ENCODE measurements at regions of chr6 and their contacts with region 1.

Region 1: DNA sequence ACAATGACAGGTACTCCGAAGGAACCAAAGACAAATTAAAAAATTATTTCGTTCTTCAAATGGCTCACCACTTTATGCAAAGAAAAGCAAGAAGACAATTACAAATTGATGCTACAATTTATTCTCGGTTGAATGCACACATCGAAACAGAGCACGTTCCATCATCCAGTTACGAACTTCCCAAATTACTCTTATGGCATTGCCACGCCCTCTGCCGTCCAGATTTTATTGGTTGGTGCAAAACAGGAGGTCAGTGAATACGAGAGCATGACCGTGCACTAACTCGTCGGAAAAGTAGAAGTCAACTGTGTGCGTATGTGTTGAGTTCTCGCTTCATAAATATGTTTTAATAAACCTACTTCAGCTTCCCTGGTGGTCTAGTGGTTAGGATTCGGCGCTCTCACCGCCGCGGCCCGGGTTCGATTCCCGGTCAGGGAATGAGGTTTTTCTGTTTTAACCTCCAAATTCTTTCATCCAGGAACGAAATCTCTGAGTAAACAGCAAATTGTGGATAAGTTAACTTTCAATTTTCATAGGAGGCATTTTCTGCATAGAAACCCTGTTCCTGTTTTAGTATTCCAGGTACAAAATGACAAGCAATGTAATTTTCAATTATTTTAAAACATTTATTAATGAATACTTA is 23.2 kb downstream of the ZNF311 start:
- DNase-seq: peak; percentile 81 to 82
- H3K4me3 ChIP-seq: peak overlapping the region; percentile 74
- H3K4me3 Mint-ChIP-seq: peak overlapping the region; percentile 94
- H3K27ac Mint-ChIP-seq: peak overlapping the region; percentile 91
- H3K4me1 ChIP-seq: 0 out of 2 replicates have a peak, but pooled peaks cover 4% of the 10 kb centered on the region
- H3K4me1 Mint-ChIP-seq: peaks cover 29% of the 10 kb centered on the region
- H3K27me3 ChIP-seq: no peaks in the 10 kb centered on the region
- H3K27me3 Mint-ChIP-seq: peaks cover 4% of the 10 kb centered on the region
- CTCF ChIP-seq: no peak

Region 2: DNA sequence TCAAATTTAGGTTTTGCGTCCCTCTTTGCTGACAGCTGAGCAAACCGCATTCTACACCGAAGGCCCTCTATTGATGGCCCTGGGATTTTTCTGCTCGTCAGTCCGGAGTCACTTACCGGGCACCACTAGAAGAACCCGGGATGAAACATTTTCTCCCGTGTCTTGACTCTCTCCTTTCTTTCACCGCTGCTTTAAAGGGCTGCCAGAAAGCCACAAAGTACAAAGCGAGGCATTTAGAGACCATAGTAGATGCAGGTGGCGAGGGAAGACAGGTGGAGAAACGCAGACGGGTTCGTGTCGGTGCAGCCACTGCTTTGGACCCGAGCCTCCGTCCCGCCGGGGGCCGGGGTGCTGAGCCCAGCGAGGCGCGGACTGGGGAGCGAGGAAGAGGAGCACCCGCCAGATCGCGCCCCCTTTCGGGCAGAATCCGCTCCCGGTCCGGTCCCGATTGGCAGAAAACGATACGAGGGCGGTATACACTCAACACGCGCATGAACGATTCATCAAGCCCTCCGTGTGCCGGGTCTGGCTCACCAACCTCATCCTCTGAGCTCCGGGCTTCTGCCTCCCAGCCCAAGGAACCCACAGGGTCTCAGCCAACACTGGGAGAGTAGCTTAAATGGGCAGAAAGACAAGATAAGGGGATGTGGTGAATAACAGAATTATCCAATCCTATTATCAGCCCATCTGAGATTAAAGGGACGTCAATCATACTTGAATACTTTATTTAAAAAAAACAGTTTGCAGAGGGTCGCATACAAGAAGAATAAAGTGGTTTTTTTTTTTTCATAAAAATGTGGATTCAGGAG is 143.1 kb before region 1 on chr6:
- CTCF ChIA-PET with region 1: interaction called, 5 read pairs
- POLR2A ChIA-PET with region 1: interaction called, 12 read pairs
- intact Hi-C with region 1: loop called (anchors 1 kb)
- DNase-seq: peak; percentile 85 to 90
- H3K4me3 ChIP-seq: peak overlapping the region; percentile 66
- H3K4me3 Mint-ChIP-seq: peak overlapping the region; percentile 96
- H3K27ac Mint-ChIP-seq: peak overlapping the region; percentile 94
- H3K4me1 ChIP-seq: no peaks in the 10 kb centered on the region; the same call in 1 of the 2 replicates
- H3K4me1 Mint-ChIP-seq: peaks cover 6% of the 10 kb centered on the region
- H3K27me3 ChIP-seq: no peaks in the 10 kb centered on the region
- H3K27me3 Mint-ChIP-seq: peaks cover 3% of the 10 kb centered on the region
- CTCF ChIP-seq: peak; percentile 68 to 75

Region 3: GRCh38 chr6:28895134-28895812 is 86.7 kb before region 1 on chr6:
- CTCF ChIA-PET with region 1: no interaction called
- POLR2A ChIA-PET with region 1: interaction called, 4 read pairs
- intact Hi-C with region 1: loop called (anchors 1 kb)
- DNase-seq: peak; percentile 92 to 96
- H3K4me3 ChIP-seq: peak overlapping the region; percentile 62
- H3K4me3 Mint-ChIP-seq: peak overlapping the region; percentile 95
- H3K27ac Mint-ChIP-seq: peak overlapping the region; percentile 98
- H3K4me1 ChIP-seq: no peaks in the 10 kb centered on the region
- H3K4me1 Mint-ChIP-seq: no peaks in the 10 kb centered on the region
- H3K27me3 ChIP-seq: no peaks in the 10 kb centered on the region
- H3K27me3 Mint-ChIP-seq: no peaks in the 10 kb centered on the region
- CTCF ChIP-seq: no peak

Region 4: DNA sequence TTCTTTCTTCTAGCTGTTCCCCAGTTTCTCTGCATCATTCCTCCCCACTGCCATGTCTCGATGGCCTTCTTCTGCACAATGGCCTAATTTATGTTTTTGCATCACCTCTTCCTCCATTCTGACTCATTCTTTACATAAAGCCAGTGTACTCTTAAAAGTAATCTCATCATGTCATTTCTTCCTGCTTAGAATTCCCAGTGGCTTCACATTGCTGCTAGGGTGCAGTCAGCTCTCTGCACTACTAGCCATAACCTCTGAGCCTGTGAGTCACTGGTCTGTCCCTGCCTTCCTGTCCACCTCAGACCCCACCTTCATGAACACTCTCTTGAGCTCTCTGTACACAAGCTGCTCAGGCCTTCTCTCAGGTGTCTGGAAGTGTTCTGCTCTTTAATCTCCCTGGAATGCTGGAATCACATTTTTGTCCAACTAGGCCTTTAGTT is 34.1 kb before region 1 on chr6:
- CTCF ChIA-PET with region 1: interaction called, 3 read pairs
- POLR2A ChIA-PET with region 1: no interaction called
- intact Hi-C with region 1: loop called (anchors 1 kb)
- DNase-seq: peak; percentile 69 to 85
- H3K4me3 ChIP-seq: no peak overlapping the region
- H3K4me3 Mint-ChIP-seq: peak overlapping the region; percentile 36
- H3K27ac Mint-ChIP-seq: peak overlapping the region; percentile 83
- H3K4me1 ChIP-seq: peaks cover 23% of the 10 kb centered on the region
- H3K4me1 Mint-ChIP-seq: peaks cover 43% of the 10 kb centered on the region
- H3K27me3 ChIP-seq: no peaks in the 10 kb centered on the region
- H3K27me3 Mint-ChIP-seq: peaks cover 3% of the 10 kb centered on the region
- CTCF ChIP-seq: no peak

Region 5: DNA sequence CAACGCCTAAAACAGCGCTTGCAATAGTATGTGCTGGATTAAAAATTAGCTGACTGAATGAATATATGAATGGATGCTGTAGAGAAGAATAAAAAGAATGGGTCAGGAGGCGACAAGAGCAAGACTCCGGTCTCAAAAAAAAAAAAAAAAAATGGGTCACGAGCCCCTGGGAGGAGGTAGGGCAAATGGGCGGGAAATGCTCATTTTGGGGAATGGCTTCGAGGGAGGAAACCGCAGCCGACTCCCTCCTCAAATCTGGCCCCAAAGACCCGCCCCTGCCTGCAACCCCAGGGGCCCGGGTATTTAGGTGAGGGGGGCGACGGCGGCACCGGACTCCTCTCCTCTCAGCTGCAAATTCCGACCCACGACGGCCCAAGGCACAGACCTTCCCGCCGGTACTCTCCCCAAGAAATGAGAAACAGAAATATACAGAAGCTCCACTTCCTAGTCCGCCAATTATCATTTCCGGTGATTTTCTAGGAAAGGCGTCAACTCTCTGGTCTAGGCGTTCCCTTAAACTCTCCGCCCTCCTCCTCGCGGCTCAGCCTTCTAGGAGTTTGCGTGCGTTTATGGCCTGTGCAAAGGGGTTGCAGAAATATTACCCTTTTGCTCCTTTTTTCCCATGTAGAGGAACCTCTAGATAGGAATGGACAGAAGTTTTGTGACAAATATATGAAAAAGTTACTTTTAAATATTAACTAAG is 23.4 kb after region 1 on chr6 and contains the start of gene ZNF311:
- CTCF ChIA-PET with region 1: no interaction called
- POLR2A ChIA-PET with region 1: interaction called, 11 read pairs
- intact Hi-C with region 1: loop called (anchors 1 kb)
- DNase-seq: peak in 1 of 2 experiments; percentile 41
- H3K4me3 ChIP-seq: peak within 1 kb of the TSS; percentile 36
- H3K4me3 Mint-ChIP-seq: peak within 1 kb of the TSS; percentile 85
- H3K27ac Mint-ChIP-seq: peak within 1 kb of the TSS; percentile 82
- H3K4me1 ChIP-seq: peaks cover 3% of the 10 kb centered on the region; the same call in 1 of the 2 replicates
- H3K4me1 Mint-ChIP-seq: peaks cover 9% of the 10 kb centered on the region
- H3K27me3 ChIP-seq: no peaks in the 10 kb centered on the region
- H3K27me3 Mint-ChIP-seq: no peaks in the 10 kb centered on the region
- CTCF ChIP-seq: no peak
- total RNA-seq, gene ZNF311: 1.8 and 2.9 TPM in 2 replicates

Region 6: GRCh38 chr6:29016559-29017427 is 34.8 kb after region 1 on chr6:
- CTCF ChIA-PET with region 1: interaction called, 14 read pairs
- POLR2A ChIA-PET with region 1: interaction called, 9 read pairs
- intact Hi-C with region 1: loop called (anchors 1 kb)
- DNase-seq: peak; percentile 80 to 82
- H3K4me3 ChIP-seq: peak overlapping the region; percentile 53
- H3K4me3 Mint-ChIP-seq: peak overlapping the region; percentile 96
- H3K27ac Mint-ChIP-seq: peak overlapping the region; percentile 41
- H3K4me1 ChIP-seq: peaks cover 3% of the 10 kb centered on the region; the same call in 1 of the 2 replicates
- H3K4me1 Mint-ChIP-seq: peaks cover 6% of the 10 kb centered on the region
- H3K27me3 ChIP-seq: no peaks in the 10 kb centered on the region
- H3K27me3 Mint-ChIP-seq: peaks cover 5% of the 10 kb centered on the region
- CTCF ChIP-seq: peak; percentile 66 to 81

Measured in Caco-2 (cell line).